Heart right ventricle (tissue), 16 donors: ENCODE measurements at regions of chr18 and their contacts with region 1.

Region 1: GRCh38 chr18:26956863-26957262 is 91.4 kb upstream of the AQP4 start:
- DNase-seq: no peak
- ATAC-seq: peak in 1 of 8 donors; percentile 55
- H3K4me3 ChIP-seq: no peak overlapping the region
- H3K27ac ChIP-seq: no peak overlapping the region
- H3K4me1 ChIP-seq: peaks cover 0 to 16% (median 4%) of the 10 kb centered on the region in 9 donors
- H3K27me3 ChIP-seq: no peaks in the 10 kb centered on the region
- CTCF ChIP-seq: no peak

Region 2: DNA sequence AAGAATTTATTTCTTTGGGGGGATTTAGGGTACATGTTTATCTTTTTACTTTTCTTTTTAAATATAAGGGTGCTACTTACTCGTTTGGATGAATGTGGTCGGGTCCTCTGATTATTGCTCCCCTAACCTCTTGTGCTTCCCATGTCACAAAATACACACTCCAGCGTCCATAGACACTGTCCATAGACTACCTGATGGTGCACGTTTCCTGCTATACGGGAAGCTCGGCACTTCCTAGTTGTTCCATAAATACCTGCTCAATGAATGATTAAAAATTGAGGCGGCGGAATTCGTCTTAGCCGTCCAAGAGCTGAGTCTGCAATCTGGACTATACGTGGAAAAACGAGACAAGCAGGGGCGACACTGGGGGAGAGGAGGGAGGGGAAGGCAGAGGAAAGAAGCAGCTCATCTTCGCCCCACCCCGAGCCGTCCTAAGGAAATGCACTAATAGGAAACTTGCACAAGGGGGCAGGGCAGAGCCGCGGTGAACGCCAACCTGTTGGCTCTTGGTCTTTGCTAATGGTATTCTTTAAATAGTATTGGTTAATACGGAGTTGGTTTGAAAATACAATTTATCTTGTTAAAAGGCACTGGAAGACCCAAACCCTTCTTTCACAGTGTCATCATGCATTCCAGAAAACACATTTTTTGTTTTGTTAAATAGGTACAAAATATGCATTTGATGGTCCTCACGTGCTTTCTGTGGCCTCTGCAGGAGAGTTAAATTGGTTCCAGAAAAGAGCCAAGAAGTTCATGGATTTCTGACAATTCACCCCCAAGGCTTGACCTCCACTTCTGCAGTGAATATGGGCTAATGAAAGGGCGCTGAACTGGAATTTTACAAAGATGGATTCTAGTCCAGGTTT is 335.5 kb before region 1 on chr18:
- intact Hi-C with region 1: loop called in 1 of 10 experiments (anchors 10 kb)
- DNase-seq: peak; percentile 27 to 46
- ATAC-seq: peak in 7 of 8 donors; percentile 57 to 91 (median 70)
- H3K4me3 ChIP-seq: peak overlapping the region in 1 of 10 donors; percentile 20
- H3K27ac ChIP-seq: no peak overlapping the region
- H3K4me1 ChIP-seq: peaks cover 0 to 9% (median 0%) of the 10 kb centered on the region in 9 donors
- H3K27me3 ChIP-seq: no peaks in the 10 kb centered on the region
- CTCF ChIP-seq: peak in 8 of 9 donors; percentile 50 to 75 (median 68)

Region 3: DNA sequence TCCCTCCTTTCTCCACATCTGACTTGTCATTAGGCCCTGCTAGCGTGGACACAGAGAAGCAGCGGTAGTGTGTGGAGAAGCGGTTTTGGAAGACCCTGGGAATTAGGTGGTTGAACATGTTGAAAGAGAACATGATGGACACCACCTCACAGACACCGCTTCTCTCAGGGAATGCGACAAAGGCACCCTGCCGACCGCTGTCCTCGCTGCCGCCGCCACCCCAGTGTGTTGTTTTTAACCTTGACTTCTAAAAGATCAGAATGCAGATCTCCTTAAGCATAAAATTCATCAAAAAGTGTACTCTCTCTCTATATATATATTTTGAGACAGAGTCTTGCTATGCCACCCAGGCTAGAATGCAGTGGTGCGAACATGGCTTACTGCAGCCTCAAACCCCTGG is 124.6 kb before region 1 on chr18:
- intact Hi-C with region 1: loop called in 1 of 10 experiments (anchors 5 kb)
- DNase-seq: no peak
- ATAC-seq: no peak
- H3K4me3 ChIP-seq: no peak overlapping the region
- H3K27ac ChIP-seq: no peak overlapping the region
- H3K4me1 ChIP-seq: no peaks in the 10 kb centered on the region
- H3K27me3 ChIP-seq: peaks cover 0 to 4% (median 0%) of the 10 kb centered on the region in 7 donors
- CTCF ChIP-seq: no peak

Region 4: DNA sequence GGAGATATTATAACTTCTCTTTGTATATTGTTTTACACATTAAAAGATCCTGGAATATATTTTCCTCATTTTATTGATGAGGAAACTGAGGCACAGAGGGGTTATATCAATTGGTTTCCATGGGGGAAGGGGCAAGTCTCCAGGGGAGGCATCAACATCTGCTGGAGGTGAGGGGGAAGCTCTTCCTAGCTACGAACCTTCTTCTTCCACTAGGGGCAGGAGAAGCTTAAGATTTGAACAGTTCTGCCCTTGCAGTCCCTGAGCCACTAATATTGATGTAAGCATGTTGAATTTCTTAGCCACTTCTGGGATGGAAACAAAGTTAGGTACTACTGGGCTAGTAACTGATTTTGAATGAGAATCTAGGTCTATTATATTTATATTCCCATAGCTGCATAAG is 48.7 kb after region 1 on chr18:
- intact Hi-C with region 1: no loop called
- DNase-seq: no peak
- ATAC-seq: no peak
- H3K4me3 ChIP-seq: no peak overlapping the region
- H3K27ac ChIP-seq: no peak overlapping the region
- H3K4me1 ChIP-seq: no peaks in the 10 kb centered on the region
- H3K27me3 ChIP-seq: peaks cover 0 to 4% (median 0%) of the 10 kb centered on the region in 7 donors
- CTCF ChIP-seq: peak; percentile 2 to 38 (median 20)